ENCODE measurements at regions of chr15 and their contacts with region 1.

Region 1: GRCh38 chr15:65067645-65068402 is at the start of gene RASL12:
- DNase-seq: peak; percentile 78 to 90
- ATAC-seq: peak; percentile 65
- H3K4me3 ChIP-seq: peak within 1 kb of the TSS; percentile 90 to 91
- H3K27ac ChIP-seq: peak within 1 kb of the TSS; percentile 88 to 100
- H3K4me1 ChIP-seq: peaks cover 2 to 8% of the 10 kb centered on the region in 2 donors
- H3K27me3 ChIP-seq: no peaks in the 10 kb centered on the region
- total RNA-seq, gene RASL12: 86.9 to 171 TPM

Region 2: DNA sequence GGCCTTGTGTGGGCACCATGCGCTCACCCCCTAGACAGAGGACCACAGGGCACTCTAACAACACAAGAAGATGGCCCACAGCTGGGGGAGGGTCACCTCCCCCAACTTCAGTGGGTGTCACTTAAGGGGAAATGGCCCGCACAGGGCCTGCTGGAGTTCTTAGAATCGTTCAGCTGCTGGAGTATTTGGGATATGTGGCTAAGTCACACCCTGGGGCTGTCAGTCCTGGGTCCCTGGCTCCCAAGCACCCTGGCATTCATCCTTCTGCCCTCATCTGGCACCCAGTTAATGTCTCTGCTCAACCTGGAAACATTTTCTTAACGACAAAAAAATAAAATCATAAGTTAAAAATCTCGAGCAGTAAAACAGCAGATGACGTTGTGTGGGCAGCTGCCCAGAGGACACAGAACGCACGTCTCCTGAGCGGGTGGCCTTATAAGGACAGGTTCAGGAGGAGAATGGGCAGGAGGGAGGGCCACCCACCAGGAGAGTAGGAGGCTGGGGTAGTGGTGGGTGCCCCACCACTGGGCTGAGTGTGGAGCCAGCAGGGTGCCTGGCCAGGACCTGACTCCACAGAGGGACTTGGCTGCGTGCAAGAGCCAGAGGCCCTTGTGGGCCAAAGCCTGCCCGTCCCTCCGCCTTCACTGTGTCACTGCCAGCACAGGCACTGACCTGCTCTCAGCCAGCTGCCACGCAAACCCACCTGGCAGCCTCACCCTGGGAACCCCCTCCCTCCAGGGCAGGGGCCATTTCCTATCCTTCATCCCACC is 20.2 kb after region 1 on chr15:
- intact Hi-C with region 1: loop called (anchors 2 kb)
- DNase-seq: peak; percentile 95 to 97
- ATAC-seq: peak; percentile 90
- H3K4me3 ChIP-seq: no peak overlapping the region
- H3K27ac ChIP-seq: peak overlapping the region; percentile 92 to 98
- H3K4me1 ChIP-seq: peaks cover 2 to 6% of the 10 kb centered on the region in 2 donors
- H3K27me3 ChIP-seq: no peaks in the 10 kb centered on the region